ENCODE measurements at regions of chr3 and their contacts with region 1.

Region 1: GRCh38 chr3:50568947-50569749 is at the start of gene HEMK1:
- DNase-seq: peak; percentile 90 to 99
- H3K4me3 ChIP-seq: peak within 1 kb of the TSS; percentile 74 to 89
- H3K27ac ChIP-seq: peak within 1 kb of the TSS; percentile 75 to 85
- H3K4me1 ChIP-seq: peaks cover 0 to 19% of the 10 kb centered on the region in 2 donors
- H3K27me3 ChIP-seq: no peaks in the 10 kb centered on the region
- CTCF ChIP-seq: no peak
- total RNA-seq, gene HEMK1: 13.1 TPM

Region 2: GRCh38 chr3:50358911-50359759 is 210.0 kb before region 1 on chr3 and contains the start of gene TMEM115:
- intact Hi-C with region 1: loop called (anchors 2 kb)
- DNase-seq: peak; percentile 96 to 99
- H3K4me3 ChIP-seq: peak within 1 kb of the TSS; percentile 87 to 92
- H3K27ac ChIP-seq: peak within 1 kb of the TSS; percentile 89 to 90
- H3K4me1 ChIP-seq: peaks cover 14 to 33% of the 10 kb centered on the region in 2 donors
- H3K27me3 ChIP-seq: no peaks in the 10 kb centered on the region
- CTCF ChIP-seq: no peak
- total RNA-seq, gene TMEM115: 55.7 TPM

Region 3: DNA sequence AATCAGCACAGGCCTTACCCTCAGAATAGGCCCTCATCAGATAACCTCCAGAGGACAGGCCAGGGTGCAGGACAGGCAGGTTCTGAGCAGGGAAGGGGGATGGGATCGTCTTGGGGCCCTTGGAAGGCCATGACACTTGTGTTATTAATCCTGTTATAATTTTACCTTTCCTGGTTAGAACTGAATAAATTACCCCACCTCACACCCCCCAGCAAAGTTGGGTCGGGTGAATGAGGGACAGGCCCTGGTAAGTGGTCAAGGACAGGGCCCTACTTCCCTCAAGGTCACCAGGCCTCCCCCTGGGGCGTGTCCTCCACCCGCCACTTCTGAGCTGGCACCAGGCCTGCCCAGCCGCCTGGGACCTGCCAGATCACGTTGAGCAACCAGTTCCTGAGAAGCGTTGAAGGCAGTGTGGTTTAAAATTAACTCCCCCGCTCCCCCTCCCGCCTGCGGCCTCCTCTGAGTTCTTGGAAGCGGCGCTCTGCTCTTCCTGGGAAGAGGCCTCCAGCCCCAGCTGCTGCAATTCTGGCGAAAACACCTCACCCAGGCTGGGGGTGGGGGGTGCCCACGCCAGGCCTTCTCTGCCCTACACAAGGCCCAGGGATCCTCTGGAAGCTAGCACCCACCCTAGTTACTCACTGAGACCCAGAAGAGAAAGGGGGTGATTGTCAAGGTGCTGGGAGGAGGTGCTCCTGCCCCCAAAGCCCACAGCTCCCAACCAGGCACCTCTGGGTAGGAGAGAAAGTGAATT is 31.9 kb after region 1 on chr3:
- intact Hi-C with region 1: loop called (anchors 1 kb)
- DNase-seq: peak; percentile 88 to 98
- H3K4me3 ChIP-seq: peak overlapping the region; percentile 21 to 46
- H3K27ac ChIP-seq: peak overlapping the region; percentile 94 to 98
- H3K4me1 ChIP-seq: peaks cover 20 to 29% of the 10 kb centered on the region in 2 donors
- H3K27me3 ChIP-seq: no peaks in the 10 kb centered on the region
- CTCF ChIP-seq: no peak

Region 4: DNA sequence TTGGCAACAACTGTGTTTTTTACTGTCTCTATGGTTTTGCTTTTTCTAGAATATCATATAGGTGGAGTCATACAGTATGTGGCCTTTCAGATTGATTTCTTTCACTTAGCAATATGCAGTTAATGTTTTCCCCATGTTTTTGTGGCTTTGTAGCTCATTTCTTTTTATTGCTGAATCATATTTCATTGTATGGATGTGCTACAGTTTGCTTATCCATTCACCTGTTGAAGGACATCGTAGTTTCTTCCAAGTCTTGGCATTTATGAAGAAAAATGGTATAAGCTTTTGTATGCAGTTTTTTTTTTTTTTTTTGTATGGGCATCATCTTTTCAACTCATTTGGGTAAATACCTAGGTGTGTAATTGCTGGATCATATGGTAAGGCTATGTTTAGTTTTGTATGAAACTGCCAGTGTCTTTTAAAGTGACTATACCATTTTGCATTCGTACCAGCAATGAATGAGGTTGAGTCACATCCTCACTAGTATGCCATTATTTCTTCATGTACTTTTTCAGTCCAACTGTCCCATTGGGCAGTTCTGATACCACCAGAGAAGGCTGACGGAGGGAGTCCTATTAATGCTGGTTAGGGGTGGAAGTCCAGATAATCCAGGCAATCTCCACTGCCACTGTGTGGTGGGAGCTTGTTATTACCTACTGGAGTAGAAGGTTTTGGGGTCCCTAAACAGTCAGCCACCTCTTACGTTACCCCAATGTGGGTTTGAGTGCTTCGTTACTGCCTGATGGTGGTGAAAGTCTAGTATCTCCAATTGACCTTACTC is 316.1 kb after region 1 on chr3:
- intact Hi-C with region 1: no loop called
- DNase-seq: no peak
- H3K4me3 ChIP-seq: no peak overlapping the region
- H3K27ac ChIP-seq: no peak overlapping the region
- H3K4me1 ChIP-seq: no peaks in the 10 kb centered on the region
- H3K27me3 ChIP-seq: no peaks in the 10 kb centered on the region
- CTCF ChIP-seq: no peak

Region 5: GRCh38 chr3:51384726-51385473 is 815.8 kb after region 1 on chr3 and contains the start of gene MANF:
- intact Hi-C with region 1: loop called (anchors 2 kb)
- DNase-seq: peak; percentile 97 to 99
- H3K4me3 ChIP-seq: peak within 1 kb of the TSS; percentile 92
- H3K27ac ChIP-seq: peak within 1 kb of the TSS; percentile 92 to 98
- H3K4me1 ChIP-seq: peaks cover 5 to 28% of the 10 kb centered on the region in 2 donors
- H3K27me3 ChIP-seq: no peaks in the 10 kb centered on the region
- CTCF ChIP-seq: peak in 1 of 3 experiments; percentile 37
- total RNA-seq, gene MANF: 34.4 TPM

Region 6: DNA sequence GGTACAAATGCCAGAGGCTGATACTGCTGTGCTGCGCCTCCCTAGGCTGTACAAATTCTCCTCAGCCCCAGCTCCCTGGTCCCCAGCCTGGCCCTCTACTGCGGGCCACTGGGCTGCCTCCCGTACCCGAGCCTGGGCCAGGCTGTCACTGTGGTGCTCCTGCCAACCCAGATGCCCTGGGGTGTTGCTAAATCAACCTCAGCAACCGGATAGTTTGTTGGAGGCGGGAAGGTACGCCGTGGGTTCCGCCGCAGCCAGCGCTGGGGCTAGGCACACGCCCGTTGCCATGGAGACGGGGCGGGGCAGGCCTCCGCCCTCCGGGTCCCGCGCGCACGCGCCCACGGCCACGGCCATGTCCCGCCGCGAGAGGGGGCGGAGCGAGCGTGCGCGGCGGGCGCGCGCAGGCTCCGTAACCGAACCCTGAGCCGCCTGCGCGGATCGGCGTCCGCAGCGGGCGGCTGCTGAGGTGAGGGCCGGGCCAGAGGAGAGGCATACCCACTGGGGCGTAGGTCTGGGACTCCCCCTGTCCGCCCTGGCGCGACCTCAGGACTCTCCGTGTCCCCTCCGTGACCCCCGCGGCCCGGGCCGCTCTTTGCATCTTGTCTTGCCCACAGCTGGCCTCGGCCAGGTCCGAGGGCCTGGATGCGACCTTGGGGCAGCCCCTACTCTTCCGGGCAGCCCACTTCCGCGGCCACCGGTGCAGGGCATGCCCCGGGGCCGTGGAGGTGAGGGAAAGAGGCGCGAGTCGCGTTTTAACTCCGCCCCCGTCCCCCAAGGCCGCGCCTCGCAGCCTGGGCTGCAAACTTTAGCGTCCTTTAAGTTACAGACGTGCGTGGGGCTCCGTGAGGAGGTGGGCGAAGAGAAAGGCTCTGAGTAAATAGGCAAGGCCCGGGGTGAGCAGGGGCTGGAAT is 1101.9 kb after region 1 on chr3 and contains the start of gene TEX264:
- intact Hi-C with region 1: loop called (anchors 2 kb)
- DNase-seq: peak; percentile 56 to 94
- H3K4me3 ChIP-seq: peak within 1 kb of the TSS; percentile 88 to 91
- H3K27ac ChIP-seq: peak within 1 kb of the TSS; percentile 83 to 89
- H3K4me1 ChIP-seq: peaks cover 5 to 14% of the 10 kb centered on the region in 2 donors
- H3K27me3 ChIP-seq: no peaks in the 10 kb centered on the region
- CTCF ChIP-seq: no peak
- total RNA-seq, gene TEX264: 69.1 TPM